ENCODE measurements at regions of chr4 and their contacts with region 1.

Region 1: GRCh38 chr4:102868781-102869568 is at the start of gene CISD2:
- DNase-seq: peak; percentile 92 to 94 (median 92)
- H3K4me3 ChIP-seq: peak within 1 kb of the TSS; percentile 58 to 74
- H3K4me3 Mint-ChIP-seq: peak within 1 kb of the TSS; percentile 91 to 99 (median 95)
- H3K27ac ChIP-seq: peak within 1 kb of the TSS; percentile 91
- H3K27ac Mint-ChIP-seq: peak within 1 kb of the TSS; percentile 95 to 100 (median 99)
- H3K4me1 ChIP-seq: peaks cover 54% of the 10 kb centered on the region
- H3K4me1 Mint-ChIP-seq: peaks cover 39 to 82% (median 50%) of the 10 kb centered on the region in 4 donors
- H3K27me3 ChIP-seq: no peaks in the 10 kb centered on the region
- H3K27me3 Mint-ChIP-seq: no peaks in the 10 kb centered on the region
- total RNA-seq, gene CISD2: 18.5 to 22.0 TPM

Region 2: DNA sequence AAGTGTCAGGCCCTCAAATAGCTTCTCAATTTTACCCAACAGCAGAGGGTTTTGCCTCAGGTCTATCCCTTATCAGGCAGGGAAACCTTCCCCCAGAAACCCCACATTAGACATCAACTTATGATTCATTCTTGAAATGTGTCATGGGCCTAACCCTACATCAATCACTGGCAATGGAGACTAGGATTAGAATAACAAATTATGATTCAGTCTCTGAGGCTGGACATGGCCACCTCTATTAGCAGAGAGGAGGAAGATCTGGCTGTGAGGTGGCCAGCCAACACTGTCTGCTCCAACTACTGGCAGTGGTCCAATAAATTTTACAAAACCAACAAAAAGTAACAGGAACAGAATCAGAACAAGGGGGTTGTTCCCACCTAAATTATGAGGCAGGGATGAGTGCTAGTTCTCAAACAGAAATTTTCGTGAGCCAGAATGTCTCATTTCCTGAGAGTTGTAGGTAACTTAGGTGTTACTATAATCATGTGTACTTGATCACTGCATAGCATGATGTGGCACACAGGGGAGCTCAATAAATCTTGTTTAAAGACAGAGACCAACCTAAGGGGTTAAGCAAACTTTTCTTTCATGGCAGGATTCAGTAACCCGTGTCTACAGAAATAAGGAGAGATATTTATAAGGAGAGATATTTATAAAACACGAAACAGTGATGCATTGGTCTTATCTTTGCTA is 241.0 kb before region 1 on chr4:
- CTCF ChIA-PET with region 1: interaction called, 3 read pairs
- POLR2A ChIA-PET with region 1: interaction called, 5 read pairs
- intact Hi-C with region 1: loop called (anchors 2 kb)
- DNase-seq: peak in 1 of 5 donors; percentile 49
- H3K4me3 ChIP-seq: no peak overlapping the region
- H3K4me3 Mint-ChIP-seq: peak overlapping the region in 4 of 8 donors; percentile 13 to 71 (median 38)
- H3K27ac ChIP-seq: no peak overlapping the region
- H3K27ac Mint-ChIP-seq: peak overlapping the region in 5 of 7 donors; percentile 35 to 93 (median 81)
- H3K4me1 ChIP-seq: peaks cover 66% of the 10 kb centered on the region
- H3K4me1 Mint-ChIP-seq: peaks cover 47 to 94% (median 65%) of the 10 kb centered on the region in 4 donors
- H3K27me3 ChIP-seq: no peaks in the 10 kb centered on the region
- H3K27me3 Mint-ChIP-seq: no peaks in the 10 kb centered on the region

Region 3: DNA sequence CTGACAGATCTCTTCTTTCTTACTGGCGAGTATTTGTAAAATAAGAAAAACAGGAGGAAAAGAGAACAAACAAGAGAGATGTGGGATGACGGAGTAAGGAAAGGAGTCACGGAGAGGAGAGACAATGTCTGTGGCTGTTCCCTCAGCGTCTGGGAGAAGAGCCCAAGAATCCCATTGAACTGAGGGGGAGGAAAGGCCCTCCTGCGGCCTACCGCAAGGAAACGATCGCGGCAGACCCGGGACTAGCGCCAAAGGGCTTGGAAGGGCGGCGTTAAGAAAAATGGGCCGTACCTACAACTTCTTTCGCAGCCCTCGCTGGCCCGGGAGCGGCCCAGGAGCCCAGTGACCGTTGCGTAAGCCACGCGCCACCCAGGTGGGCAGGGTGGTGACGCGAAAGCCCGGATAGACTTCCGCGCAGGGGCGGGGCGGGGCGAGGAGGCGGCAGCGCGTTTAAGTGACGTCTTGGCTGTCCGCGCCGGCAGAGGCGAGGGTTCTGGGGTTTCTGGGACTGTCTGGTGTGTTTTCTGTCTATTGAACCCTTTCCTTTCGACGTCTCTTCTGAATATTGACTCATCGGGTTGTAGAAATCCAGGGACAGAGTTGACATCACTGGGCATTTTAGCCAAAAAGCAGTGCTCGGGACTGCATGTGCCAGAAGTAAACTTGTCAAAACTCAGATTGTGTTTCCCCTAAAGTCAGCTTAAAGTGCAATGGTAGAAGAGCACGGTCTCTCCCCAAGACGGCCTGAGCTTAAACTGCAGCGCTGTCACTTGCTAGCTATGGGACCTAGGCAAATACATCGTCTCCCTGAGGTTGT is 150.5 kb after region 1 on chr4 and contains the start of gene SLC9B1:
- CTCF ChIA-PET with region 1: no interaction called
- POLR2A ChIA-PET with region 1: interaction called, 7 read pairs
- intact Hi-C with region 1: loop called (anchors 1 kb)
- DNase-seq: peak; percentile 91 to 94 (median 93)
- H3K4me3 ChIP-seq: peak within 1 kb of the TSS; percentile 11 to 90
- H3K4me3 Mint-ChIP-seq: peak within 1 kb of the TSS; percentile 85 to 98 (median 91)
- H3K27ac ChIP-seq: peak within 1 kb of the TSS; percentile 85
- H3K27ac Mint-ChIP-seq: peak within 1 kb of the TSS in 6 of 7 donors; percentile 97 to 100 (median 99)
- H3K4me1 ChIP-seq: peaks cover 17% of the 10 kb centered on the region
- H3K4me1 Mint-ChIP-seq: peaks cover 10 to 23% (median 19%) of the 10 kb centered on the region in 4 donors
- H3K27me3 ChIP-seq: no peaks in the 10 kb centered on the region
- H3K27me3 Mint-ChIP-seq: no peaks in the 10 kb centered on the region
- total RNA-seq, gene SLC9B1: 3.2 to 5.2 TPM

Region 4: GRCh38 chr4:103075901-103076739 is 207.1 kb after region 1 on chr4:
- CTCF ChIA-PET with region 1: no interaction called
- POLR2A ChIA-PET with region 1: interaction called, 17 read pairs
- intact Hi-C with region 1: loop called (anchors 2 kb)
- DNase-seq: peak; percentile 72 to 79 (median 76)
- H3K4me3 ChIP-seq: peak overlapping the region; percentile 26 to 72
- H3K4me3 Mint-ChIP-seq: peak overlapping the region; percentile 94 to 98 (median 98)
- H3K27ac ChIP-seq: peak overlapping the region; percentile 78
- H3K27ac Mint-ChIP-seq: peak overlapping the region; percentile 98 to 99 (median 99)
- H3K4me1 ChIP-seq: peaks cover 37% of the 10 kb centered on the region
- H3K4me1 Mint-ChIP-seq: peaks cover 24 to 58% (median 38%) of the 10 kb centered on the region in 4 donors
- H3K27me3 ChIP-seq: no peaks in the 10 kb centered on the region
- H3K27me3 Mint-ChIP-seq: no peaks in the 10 kb centered on the region

Measured in CD4-positive, alpha-beta memory T cell (primary cell).